ENCODE measurements at regions of chr12 and their contacts with region 1.

Region 1: DNA sequence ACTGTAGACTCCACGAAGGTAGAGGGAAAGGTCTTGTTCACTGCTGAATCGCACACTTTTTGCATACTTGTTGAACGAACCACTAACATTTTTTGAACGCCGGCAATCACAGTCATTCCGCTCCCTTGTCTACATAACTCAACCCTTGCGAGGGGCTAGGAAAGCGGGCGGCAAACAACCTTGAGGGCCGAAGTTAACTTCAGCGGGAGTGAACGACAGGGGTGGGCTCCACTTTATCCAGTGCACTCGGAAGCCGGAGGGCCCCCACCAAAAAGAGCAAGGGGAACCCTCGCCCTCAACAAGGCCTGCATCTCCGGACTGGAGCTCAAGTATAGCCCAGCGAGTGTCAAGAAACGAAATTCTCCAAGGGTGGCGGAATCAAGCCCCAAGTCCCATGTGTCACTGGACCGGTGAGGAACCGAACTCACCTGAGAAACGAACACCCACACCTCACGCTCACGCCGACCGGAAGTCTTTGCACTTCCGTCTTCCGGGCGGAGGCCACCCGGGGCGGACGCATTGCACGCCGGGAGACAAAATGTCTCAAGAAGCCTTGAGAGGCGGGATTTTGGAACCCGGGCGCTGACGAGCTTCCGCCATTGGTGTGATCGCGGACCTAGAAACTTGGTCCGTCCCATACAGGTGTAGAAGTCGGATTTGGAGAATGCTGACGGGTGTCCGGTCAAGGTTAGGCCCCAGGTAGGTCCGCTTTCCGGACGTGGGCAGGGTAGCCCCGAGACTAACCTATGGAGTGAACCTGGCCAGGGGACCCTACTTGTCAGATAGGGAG is at the start of gene LLPH:
- DNase-seq: peak; percentile 93
- H3K4me3 ChIP-seq: peak within 1 kb of the TSS; percentile 61 to 97 (median 76)
- H3K27ac ChIP-seq: peak within 1 kb of the TSS; percentile 71 to 79 (median 78)
- H3K4me1 ChIP-seq: peaks cover 0 to 27% (median 17%) of the 10 kb centered on the region in 4 donors
- H3K27me3 ChIP-seq: no peaks in the 10 kb centered on the region
- CTCF ChIP-seq: no peak
- EP300 ChIP-seq: no peak
- POLR2A ChIP-seq: peak; percentile 83
- total RNA-seq, gene LLPH: 3.5 to 4.9 (median 3.9) TPM

Region 2: DNA sequence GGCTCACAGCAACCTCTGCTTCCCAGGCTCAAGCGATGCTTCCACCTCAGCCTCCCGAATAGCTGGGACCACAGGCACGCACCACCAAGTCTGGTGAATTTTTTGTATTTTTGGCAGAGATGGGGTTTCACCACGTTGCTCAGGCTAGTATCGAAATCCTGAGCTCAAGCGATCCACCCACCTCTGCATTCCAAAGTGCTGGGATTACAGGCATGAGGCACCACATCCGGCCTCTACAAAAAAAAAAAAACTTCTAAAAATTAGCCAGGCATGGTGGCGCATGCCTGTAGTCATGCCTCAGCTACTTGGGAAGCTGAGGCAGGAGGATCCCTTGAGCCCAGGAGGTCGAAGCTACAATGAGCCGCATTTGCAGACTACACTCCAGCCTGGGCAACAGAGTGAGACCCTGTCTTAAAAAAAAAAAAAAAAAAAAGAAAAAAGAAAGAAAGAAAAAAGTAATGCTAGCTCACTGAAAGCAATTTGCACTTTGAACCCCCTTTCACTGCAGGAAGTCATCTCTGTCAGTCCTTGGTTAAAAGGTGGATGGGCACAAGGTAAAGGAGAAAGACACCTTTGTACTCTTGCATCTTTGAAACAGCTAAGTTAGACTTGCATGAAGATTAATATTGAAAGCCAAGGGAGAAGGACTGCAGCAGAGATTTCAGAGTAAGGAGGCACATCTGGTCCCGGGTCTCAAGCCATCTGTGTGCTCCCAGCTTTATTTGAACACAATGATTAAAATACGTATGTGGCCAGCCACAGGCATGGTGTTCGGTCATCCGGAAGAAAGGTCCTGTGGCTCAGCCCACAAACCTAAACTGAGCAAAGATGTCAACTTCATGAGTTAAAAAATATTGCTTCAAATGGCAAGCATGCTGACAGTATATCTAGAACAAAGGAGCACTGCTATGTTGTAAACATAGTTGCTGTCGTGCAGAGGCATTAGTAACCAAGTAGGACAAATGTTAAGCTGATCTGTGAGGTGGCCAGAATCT is 410.0 kb before region 1 on chr12:
- in situ Hi-C with region 1: no loop called
- intact Hi-C with region 1: no loop called
- DNase-seq: no peak
- H3K4me3 ChIP-seq: no peak overlapping the region
- H3K27ac ChIP-seq: no peak overlapping the region
- H3K4me1 ChIP-seq: no peaks in the 10 kb centered on the region
- H3K27me3 ChIP-seq: peaks cover 34% of the 10 kb centered on the region
- CTCF ChIP-seq: no peak
- EP300 ChIP-seq: no peak
- POLR2A ChIP-seq: no peak

Region 3: GRCh38 chr12:66047411-66048021 is 83.0 kb before region 1 on chr12:
- in situ Hi-C with region 1: no loop called
- intact Hi-C with region 1: no loop called
- DNase-seq: no peak
- H3K4me3 ChIP-seq: no peak overlapping the region
- H3K27ac ChIP-seq: no peak overlapping the region
- H3K4me1 ChIP-seq: peaks cover 0 to 5% (median 2%) of the 10 kb centered on the region in 4 donors
- H3K27me3 ChIP-seq: peaks cover 4% of the 10 kb centered on the region
- CTCF ChIP-seq: no peak
- EP300 ChIP-seq: no peak
- POLR2A ChIP-seq: no peak

Region 4: DNA sequence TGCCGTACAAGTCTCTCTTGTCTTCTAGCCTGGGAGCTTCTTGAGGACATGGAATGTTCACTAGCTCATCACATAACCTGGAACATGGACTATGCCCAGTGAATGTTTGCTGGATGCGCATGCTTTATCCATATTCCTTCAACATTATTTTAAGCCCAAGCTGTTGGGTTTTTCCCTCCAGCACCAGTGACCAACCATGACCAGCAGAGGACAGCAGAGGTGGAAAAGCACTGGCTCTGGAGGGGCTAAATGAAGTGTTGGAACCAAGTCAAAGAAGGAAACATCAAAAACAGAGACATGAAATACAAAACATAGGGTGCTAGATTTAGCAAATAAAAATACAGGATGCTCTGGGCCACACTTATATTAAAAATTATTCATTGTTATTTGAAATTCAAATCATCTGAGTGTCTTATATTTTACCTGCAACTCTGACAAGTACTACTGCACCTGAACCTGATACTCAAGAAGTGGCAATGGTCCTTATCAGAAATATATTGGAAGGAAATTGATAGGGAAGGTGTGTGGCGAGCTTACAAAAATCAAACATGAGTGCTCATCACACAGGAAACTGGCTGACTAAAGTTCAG is 148.7 kb after region 1 on chr12:
- in situ Hi-C with region 1: loop called in 1 of 4 experiments (anchors 25 kb)
- intact Hi-C with region 1: no loop called
- DNase-seq: no peak
- H3K4me3 ChIP-seq: no peak overlapping the region
- H3K27ac ChIP-seq: no peak overlapping the region
- H3K4me1 ChIP-seq: no peaks in the 10 kb centered on the region
- H3K27me3 ChIP-seq: no peaks in the 10 kb centered on the region
- CTCF ChIP-seq: peak; percentile 29 to 50 (median 45)
- EP300 ChIP-seq: no peak
- POLR2A ChIP-seq: no peak